ENCODE measurements at regions of chr20 and their contacts with region 1.

Region 1: DNA sequence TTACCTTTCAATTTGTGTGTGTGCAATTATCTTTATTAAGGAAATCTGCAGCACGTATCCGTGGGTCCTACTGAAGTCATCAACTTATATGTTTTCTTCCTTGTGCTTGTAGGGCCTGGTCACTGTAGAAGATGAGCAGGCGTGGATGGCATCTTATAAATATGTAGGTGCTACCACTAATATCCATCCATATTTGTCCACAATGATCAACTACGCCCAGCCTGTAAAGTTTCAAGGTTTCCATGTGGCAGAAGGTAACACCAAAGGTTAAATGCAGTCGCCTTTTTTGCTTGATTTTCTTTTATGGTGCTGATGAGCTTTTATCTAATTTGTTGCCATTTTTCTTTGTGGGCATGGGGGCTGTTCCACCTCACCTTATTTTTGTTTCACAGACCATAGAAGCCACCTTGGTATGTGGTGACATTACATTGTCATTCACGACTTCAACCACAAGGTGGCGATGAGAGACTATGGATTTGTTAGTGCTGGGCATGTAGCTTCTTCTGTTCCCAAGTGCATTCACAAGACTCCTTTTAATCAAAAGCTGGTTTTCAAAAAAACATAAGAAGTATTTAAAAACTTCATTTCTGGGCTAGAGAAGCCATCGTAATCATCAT is 106.5 kb upstream of the LAMP5 start:
- DNase-seq: peak; percentile 22
- H3K4me3 ChIP-seq: no peak overlapping the region
- H3K27me3 ChIP-seq: no peaks in the 10 kb centered on the region
- CTCF ChIP-seq: peak; percentile 77

Region 2: DNA sequence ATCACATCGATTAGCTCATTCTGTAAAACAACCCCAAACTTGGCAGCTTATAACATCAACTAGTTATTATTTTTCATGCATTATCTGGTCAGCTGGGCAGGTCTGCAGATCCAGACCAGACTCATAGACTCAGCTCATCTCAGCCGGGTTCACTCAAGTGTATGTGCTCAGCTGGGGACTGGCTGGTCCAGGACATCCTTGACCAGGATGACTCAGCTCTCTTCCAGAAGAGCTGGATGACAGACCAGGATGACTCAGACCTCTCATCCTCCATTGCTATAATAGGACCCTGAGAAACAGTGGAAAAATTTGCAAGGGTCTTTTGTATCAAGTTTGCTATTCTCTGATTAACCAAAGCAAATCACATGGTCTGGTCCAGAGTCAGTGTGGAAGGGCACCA is 651.5 kb before region 1 on chr20:
- CTCF ChIA-PET with region 1: interaction called, 11 read pairs
- POLR2A ChIA-PET with region 1: no interaction called
- DNase-seq: peak; percentile 40
- H3K4me3 ChIP-seq: no peak overlapping the region
- H3K27me3 ChIP-seq: no peaks in the 10 kb centered on the region
- CTCF ChIP-seq: no peak

Region 3: DNA sequence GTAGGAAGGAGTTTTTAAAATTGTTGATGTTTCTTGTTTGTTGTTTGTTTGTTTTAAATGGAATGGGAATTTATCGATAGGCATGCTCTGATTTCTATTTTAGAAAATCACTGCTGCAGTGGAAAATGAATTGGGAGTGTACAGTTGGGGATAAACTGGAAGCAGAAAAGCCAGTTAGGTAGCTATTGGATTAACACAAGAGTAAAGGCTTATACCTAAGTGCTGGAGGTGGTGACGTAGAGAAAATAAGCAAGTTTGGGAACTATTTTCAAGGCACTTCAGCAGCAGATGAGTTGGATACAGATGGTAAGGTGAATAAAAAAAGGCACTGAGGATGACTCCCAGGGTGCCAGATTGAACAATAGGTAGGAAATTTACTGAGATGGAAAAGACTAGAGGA is 174.1 kb before region 1 on chr20:
- CTCF ChIA-PET with region 1: no interaction called
- POLR2A ChIA-PET with region 1: no interaction called
- DNase-seq: no peak
- H3K4me3 ChIP-seq: no peak overlapping the region
- H3K27me3 ChIP-seq: no peaks in the 10 kb centered on the region
- CTCF ChIP-seq: no peak

Region 4: DNA sequence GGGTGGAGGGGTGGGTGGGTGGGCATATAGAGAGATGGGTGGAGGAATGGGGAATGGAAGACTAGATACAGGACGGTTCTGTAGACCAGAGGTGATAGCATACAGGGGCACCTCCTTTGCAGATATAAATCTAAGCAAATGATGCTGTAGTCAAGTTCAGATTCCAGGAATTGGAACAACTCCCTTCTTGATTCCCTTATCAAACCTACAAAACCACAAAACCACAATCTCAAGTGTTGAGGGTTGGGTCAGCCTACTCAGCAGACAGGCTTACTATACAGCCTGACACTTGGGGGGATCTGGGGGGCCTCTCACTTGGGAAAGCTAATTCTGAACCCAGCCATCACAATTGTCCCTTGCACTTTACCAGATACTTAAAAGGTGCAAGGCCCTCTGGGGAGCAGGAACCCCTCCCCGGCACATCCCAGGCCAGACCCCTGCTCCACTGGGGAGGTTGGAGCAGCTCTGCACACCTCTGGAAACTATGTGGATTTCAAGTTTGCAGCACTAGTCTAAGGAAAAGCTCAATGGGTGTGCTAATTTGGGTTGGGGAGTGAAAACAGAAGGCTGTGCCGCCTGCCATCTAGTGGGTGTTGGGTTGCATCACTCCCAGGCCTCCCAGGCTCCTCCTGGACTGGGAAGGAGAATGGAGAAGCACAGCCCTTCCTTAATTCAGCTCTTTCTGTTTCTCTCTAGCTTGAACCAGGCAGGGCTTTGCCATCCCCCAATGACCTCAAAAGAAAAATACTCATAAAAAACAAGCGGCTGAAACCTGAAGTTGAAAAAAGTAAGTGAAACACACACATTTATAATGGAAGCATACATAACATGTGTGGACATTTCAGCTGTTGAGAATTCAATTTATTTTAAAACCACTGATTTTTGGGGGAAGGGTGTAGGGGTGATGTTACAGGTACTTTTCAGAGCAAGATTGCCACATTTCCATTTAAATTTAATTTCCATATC is 14.7 kb before region 1 on chr20:
- CTCF ChIA-PET with region 1: interaction called, 18 read pairs
- POLR2A ChIA-PET with region 1: no interaction called
- DNase-seq: no peak
- H3K4me3 ChIP-seq: no peak overlapping the region
- H3K27me3 ChIP-seq: no peaks in the 10 kb centered on the region
- CTCF ChIP-seq: peak; percentile 91

Region 5: DNA sequence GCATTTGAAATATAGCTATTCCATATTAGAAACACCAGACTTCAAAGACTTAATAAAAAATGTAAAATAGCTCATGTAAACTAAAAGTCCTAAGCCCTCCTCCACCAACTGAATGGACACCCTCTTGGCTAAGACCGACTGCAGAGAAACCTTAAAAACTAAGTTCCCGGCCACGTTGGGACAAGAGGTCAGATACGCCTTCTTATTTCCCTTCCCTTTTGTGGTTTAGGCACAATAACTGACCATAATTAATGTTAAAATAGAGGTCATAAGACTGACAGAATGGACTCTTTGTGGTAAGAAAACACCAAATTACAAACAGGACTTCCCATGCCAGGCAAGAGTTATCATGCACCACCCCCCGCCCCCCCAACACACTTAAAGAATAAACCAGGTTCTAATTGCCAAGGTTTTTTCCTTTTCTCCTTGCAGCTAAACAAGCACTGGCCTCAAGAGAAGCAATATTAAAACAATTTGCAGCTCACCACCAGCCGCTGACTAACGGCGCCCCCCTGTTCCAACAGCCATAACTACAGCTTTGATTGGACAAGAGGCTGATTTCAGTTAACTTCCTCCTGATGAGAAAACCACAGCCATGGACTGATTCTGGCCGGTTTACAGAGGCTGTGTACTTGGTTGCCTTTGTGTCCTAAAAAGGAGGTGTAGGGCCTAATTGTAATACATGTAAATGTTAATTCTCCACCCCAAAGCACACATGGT is 95.8 kb after region 1 on chr20:
- CTCF ChIA-PET with region 1: interaction called, 11 read pairs
- POLR2A ChIA-PET with region 1: no interaction called
- DNase-seq: no peak
- H3K4me3 ChIP-seq: no peak overlapping the region
- H3K27me3 ChIP-seq: peaks cover 30% of the 10 kb centered on the region
- CTCF ChIP-seq: no peak

Region 6: DNA sequence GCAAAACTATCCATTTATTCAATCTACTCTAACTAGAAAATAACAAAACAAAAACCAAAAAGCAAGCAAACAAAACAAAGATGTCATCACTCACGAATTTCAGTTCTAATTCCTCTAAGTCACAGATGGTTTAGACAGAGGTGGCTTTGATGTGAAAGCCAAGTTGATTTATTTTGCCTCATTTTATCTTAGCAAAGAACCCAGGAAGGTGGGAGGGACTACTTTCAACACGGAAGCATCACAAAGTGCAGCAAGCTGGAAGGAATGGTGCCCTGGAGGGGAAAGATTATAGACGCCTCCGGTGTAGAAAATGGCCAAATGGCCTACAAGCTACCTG is 194.9 kb after region 1 on chr20:
- CTCF ChIA-PET with region 1: interaction called, 195 read pairs
- POLR2A ChIA-PET with region 1: no interaction called
- DNase-seq: no peak
- H3K4me3 ChIP-seq: no peak overlapping the region
- H3K27me3 ChIP-seq: peaks cover 5% of the 10 kb centered on the region; the same call in 1 of the 2 replicates
- CTCF ChIP-seq: no peak

Region 7: GRCh38 chr20:9609887-9610502 is 202.1 kb after region 1 on chr20:
- CTCF ChIA-PET with region 1: interaction called, 195 read pairs
- POLR2A ChIA-PET with region 1: interaction called, 4 read pairs
- DNase-seq: peak; percentile 18
- H3K4me3 ChIP-seq: no peak overlapping the region
- H3K27me3 ChIP-seq: peaks cover 1% of the 10 kb centered on the region; the same call in 1 of the 2 replicates
- CTCF ChIP-seq: peak; percentile 59

Region 8: DNA sequence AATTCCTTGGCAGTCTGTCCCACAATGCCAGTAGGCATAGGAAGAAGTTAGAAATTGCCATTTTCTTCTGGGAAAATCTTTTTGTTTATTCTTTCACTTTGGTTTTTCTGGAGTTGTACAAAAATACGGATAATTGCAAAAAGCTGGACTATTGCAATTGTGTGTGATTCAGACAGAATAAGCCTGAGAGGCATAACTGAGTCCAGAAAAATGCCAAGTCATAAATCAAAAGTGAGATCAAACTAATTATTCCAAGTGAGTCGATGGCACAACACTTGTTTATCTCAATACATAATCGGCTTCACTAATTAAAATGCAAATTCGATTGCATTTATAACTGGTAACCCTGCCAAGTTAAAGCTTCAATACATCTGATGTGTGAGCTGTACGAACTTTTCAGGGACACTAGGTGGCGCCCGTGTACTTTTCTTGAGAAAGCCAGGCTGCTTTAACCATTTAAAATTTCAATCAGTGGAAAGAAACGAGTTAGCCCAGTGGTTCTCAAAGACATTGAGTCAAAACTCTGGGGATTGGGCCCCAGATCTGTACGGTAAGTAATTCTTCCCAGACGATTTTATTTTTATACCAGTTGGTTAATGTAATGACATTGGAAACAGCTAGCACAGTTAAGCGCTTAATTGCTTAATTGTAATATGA is 209.0 kb after region 1 on chr20:
- CTCF ChIA-PET with region 1: interaction called, 195 read pairs
- POLR2A ChIA-PET with region 1: no interaction called
- DNase-seq: no peak
- H3K4me3 ChIP-seq: no peak overlapping the region
- H3K27me3 ChIP-seq: peaks cover 10% of the 10 kb centered on the region
- CTCF ChIP-seq: peak; percentile 86